ENCODE measurements at regions of chr1 and their contacts with region 1.

Region 1: DNA sequence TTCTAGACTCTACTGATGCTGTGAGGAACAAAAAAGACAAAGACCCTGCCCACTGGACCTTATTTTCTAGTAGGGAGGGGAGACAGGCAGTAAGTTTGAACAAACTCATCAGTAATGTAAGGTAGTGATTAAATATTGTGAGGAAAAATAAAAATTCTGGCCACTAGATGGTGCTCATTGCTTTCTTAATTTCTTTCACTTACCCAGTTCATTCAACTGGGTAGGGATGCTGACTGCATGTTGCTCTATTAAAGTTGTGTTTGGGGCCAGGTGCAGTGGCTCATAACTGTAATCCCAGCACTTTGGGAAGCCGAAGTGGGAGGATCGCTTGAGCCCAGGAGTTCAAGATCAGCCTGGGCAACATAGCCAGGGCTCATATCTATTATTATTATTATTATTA is 6.3 kb upstream of the KYAT3 start:
- DNase-seq: no peak
- ATAC-seq: peak; percentile 71 to 92 (median 88)
- H3K4me3 ChIP-seq: no peak overlapping the region
- H3K27ac ChIP-seq: no peak overlapping the region
- H3K4me1 ChIP-seq: peaks cover 0 to 4% (median 2%) of the 10 kb centered on the region in 12 donors
- H3K27me3 ChIP-seq: no peaks in the 10 kb centered on the region
- CTCF ChIP-seq: peak; percentile 47 to 72 (median 64)
- POLR2A ChIP-seq: no peak

Region 2: GRCh38 chr1:88791192-88791591 is 207.5 kb before region 1 on chr1:
- intact Hi-C with region 1: no loop called
- DNase-seq: no peak
- ATAC-seq: no peak
- H3K4me3 ChIP-seq: no peak overlapping the region
- H3K27ac ChIP-seq: no peak overlapping the region
- H3K4me1 ChIP-seq: no peaks in the 10 kb centered on the region
- H3K27me3 ChIP-seq: no peaks in the 10 kb centered on the region
- CTCF ChIP-seq: no peak
- POLR2A ChIP-seq: no peak

Region 3: GRCh38 chr1:89085781-89086180 is 87.1 kb after region 1 on chr1:
- intact Hi-C with region 1: loop called in 2 of 10 experiments (anchors 5 kb)
- DNase-seq: peak in 1 of 5 donors; percentile 42
- ATAC-seq: peak in 3 of 4 donors; percentile 41 to 76 (median 52)
- H3K4me3 ChIP-seq: no peak overlapping the region
- H3K27ac ChIP-seq: no peak overlapping the region
- H3K4me1 ChIP-seq: peaks cover 0 to 12% (median 0%) of the 10 kb centered on the region in 12 donors
- H3K27me3 ChIP-seq: no peaks in the 10 kb centered on the region
- CTCF ChIP-seq: peak in 10 of 12 donors; percentile 53 to 90 (median 76)
- POLR2A ChIP-seq: no peak

Region 4: DNA sequence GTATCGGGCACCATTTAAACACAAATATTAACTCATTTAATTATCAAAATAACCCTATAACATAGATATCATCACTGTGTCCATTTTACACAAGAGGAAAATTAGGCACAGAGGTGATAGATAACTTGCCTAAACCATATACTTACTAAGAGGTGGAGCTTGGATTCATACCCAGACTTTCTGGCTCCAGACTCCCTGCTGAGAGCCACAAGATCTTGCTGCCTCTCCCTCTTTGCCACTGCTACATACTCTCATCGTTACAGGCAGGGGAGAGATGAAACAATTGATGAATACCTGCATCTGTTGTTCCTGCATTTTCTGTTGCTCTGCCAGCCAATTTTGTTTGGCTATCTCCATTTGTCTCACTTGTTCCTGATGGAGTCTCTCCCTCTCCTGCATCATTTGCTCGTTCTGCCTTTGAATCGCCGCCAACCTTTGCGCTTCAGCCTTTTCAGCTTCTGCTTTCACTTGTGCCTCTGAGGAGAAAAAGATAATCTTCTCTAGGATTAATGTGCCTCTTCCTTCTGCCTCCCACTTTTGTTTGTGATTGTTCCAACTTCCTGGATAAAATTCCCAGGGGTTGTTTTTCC is 263.3 kb after region 1 on chr1:
- intact Hi-C with region 1: loop called in 1 of 10 experiments (anchors 10 kb)
- DNase-seq: peak in 3 of 5 donors; percentile 26 to 46 (median 36)
- ATAC-seq: peak in 3 of 4 donors; percentile 24 to 60 (median 56)
- H3K4me3 ChIP-seq: peak overlapping the region in 9 of 12 donors; percentile 24 to 49 (median 33)
- H3K27ac ChIP-seq: peak overlapping the region in 9 of 12 donors; percentile 9 to 68 (median 30)
- H3K4me1 ChIP-seq: peaks cover 3 to 76% (median 30%) of the 10 kb centered on the region in 12 donors
- H3K27me3 ChIP-seq: no peaks in the 10 kb centered on the region
- CTCF ChIP-seq: no peak
- POLR2A ChIP-seq: no peak

Region 5: DNA sequence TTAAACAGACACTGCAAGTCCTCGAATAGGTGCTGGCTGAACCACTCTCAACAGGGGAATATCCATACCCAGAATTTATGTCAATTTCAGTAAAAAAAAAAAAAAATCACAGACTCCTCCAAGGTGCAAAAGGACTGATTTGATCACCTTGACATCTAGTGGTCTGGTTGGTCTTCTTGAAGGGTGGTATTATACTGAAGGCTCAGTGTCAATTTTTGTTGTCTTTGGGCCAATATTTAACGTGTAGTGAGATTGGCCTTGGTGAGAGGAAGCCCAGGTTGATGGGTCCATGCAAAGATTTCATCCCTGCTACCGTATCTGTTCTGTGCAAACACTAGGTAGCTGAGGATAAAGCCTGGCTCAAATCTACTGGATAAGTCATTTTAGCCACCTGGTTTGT is 278.0 kb after region 1 on chr1:
- intact Hi-C with region 1: loop called in 1 of 10 experiments (anchors 5 kb)
- DNase-seq: no peak
- ATAC-seq: peak in 1 of 4 donors; percentile 53
- H3K4me3 ChIP-seq: no peak overlapping the region
- H3K27ac ChIP-seq: peak overlapping the region in 1 of 12 donors; percentile 32
- H3K4me1 ChIP-seq: peaks cover 0 to 65% (median 0%) of the 10 kb centered on the region in 12 donors
- H3K27me3 ChIP-seq: no peaks in the 10 kb centered on the region
- CTCF ChIP-seq: peak in 3 of 12 donors; percentile 14 to 39 (median 34)
- POLR2A ChIP-seq: no peak

Measured in heart left ventricle (tissue), 16 donors.